ENCODE measurements at regions of chr11 and their contacts with region 1.

Region 1: GRCh38 chr11:74570266-74571061 is 21.9 kb upstream of the POLD3 start:
- DNase-seq: no peak
- H3K4me3 ChIP-seq: no peak overlapping the region
- H3K27ac ChIP-seq: no peak overlapping the region
- H3K4me1 ChIP-seq: no peaks in the 10 kb centered on the region
- H3K27me3 ChIP-seq: no peaks in the 10 kb centered on the region
- CTCF ChIP-seq: peak in 2 of 3 donors; percentile 64 to 73
- POLR2A ChIP-seq: no peak

Region 2: GRCh38 chr11:74541466-74541865 is 29.0 kb before region 1 on chr11:
- intact Hi-C with region 1: loop called (anchors 1 kb)
- DNase-seq: no peak
- H3K4me3 ChIP-seq: no peak overlapping the region
- H3K27ac ChIP-seq: no peak overlapping the region
- H3K4me1 ChIP-seq: no peaks in the 10 kb centered on the region
- H3K27me3 ChIP-seq: no peaks in the 10 kb centered on the region
- CTCF ChIP-seq: no peak
- POLR2A ChIP-seq: no peak

Measured in breast epithelium (tissue), 4 donors.